Stomach (tissue), 19 donors: ENCODE measurements at regions of chr11 and their contacts with region 1.

Region 1: DNA sequence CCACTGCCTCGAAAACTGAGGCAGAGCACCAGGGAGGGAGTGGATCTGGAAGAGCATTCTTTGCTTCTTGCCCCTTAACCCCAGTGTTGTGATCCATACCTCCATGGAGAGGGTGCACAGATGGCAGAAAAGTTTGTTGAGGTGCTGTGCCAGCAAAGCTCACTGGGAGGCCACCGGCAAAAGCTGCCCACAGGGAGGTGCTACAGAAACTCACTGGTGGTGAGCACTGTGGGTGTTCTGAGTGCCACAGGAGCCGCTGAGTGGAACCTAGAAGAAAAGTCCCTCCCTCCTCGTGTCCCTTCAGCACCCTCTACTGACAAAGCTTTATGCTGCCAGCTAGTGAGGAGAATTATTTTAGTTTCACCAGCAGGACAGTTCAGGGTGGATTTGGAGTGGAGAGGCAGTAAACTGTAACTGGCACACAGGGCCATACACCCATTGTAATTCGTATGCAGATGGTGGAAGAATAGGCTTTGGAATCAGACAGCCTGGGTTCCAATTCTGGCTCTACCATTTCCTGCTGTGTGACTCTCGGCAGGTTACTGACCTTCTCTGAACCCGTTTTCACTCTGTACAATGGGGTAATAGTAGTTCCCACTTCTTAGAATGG is 84.6 kb downstream of the SWAP70 start:
- DNase-seq: peak; percentile 42 to 88
- H3K4me3 ChIP-seq: no peak overlapping the region
- H3K27ac ChIP-seq: peak overlapping the region in 3 of 5 donors; percentile 3 to 52 (median 27)
- H3K4me1 ChIP-seq: peaks cover 0 to 25% (median 9%) of the 10 kb centered on the region in 4 donors
- H3K27me3 ChIP-seq: no peaks in the 10 kb centered on the region
- CTCF ChIP-seq: peak in 5 of 7 experiments; percentile 53 to 75 (median 64)
- EP300 ChIP-seq: no peak
- POLR2A ChIP-seq: no peak

Region 2: DNA sequence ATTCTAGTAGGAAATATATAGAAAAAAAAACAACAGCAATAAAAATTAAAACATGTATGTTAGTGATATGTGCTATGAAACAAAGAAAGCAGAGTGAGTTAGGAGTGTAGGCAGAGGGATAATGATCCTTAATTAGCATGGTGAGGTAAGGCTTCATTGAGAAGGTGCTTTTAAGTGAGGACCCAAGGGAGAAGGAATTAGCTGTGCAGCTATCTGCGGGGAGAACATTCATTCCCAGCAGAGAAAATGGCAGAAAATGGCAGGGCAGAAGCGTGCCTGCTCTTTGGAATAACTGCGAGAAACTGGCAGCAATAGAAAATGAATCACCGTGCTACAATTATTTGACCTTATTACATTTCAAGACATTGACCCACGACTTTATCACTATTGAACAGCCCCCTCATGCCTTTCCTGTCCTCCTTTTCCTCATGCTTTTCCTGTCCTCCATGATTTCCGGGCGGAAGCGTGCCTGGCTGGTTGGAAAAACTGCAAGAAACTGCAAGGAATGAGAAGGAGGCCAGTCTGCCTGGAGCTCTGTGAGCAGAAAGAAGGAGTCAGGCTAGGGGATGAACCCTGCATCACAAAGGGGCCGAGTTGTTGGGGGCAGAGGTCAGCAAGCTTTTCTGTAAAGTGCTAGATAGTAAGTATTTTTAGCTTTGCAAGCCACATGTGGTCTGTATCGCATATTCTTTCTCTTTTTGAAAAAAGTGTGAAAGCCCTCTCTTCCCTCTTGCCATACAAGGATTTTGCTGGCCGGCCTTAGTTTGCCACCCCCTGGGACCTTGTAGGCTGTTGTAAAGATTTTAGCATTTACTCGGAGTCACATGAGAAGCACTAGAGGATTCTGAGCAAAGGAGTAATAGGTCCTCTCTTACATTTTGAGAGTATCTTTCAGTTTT is 121.7 kb before region 1 on chr11:
- intact Hi-C with region 1: loop called (anchors 10 kb)
- DNase-seq: peak in 1 of 2 donors; percentile 38
- H3K4me3 ChIP-seq: no peak overlapping the region
- H3K27ac ChIP-seq: peak overlapping the region in 1 of 5 donors; percentile 18
- H3K4me1 ChIP-seq: no peaks in the 10 kb centered on the region
- H3K27me3 ChIP-seq: no peaks in the 10 kb centered on the region
- CTCF ChIP-seq: no peak
- EP300 ChIP-seq: no peak
- POLR2A ChIP-seq: no peak